Transverse colon (tissue), 4 donors: ENCODE measurements at regions of chr6 and their contacts with region 1.

Region 1: GRCh38 chr6:105094133-105094640 is 85.6 kb downstream of the POPDC3 start:
- DNase-seq: no peak
- H3K4me3 ChIP-seq: no peak overlapping the region
- H3K27ac ChIP-seq: no peak overlapping the region
- H3K4me1 ChIP-seq: no peaks in the 10 kb centered on the region
- H3K27me3 ChIP-seq: no peaks in the 10 kb centered on the region
- CTCF ChIP-seq: no peak
- EP300 ChIP-seq: no peak
- POLR2A ChIP-seq: no peak

Region 2: GRCh38 chr6:105051896-105052471 is 42.2 kb before region 1 on chr6:
- in situ Hi-C with region 1: no loop called
- intact Hi-C with region 1: no loop called
- DNase-seq: no peak
- H3K4me3 ChIP-seq: no peak overlapping the region
- H3K27ac ChIP-seq: no peak overlapping the region
- H3K4me1 ChIP-seq: no peaks in the 10 kb centered on the region
- H3K27me3 ChIP-seq: no peaks in the 10 kb centered on the region
- CTCF ChIP-seq: no peak
- EP300 ChIP-seq: no peak
- POLR2A ChIP-seq: no peak

Region 3: GRCh38 chr6:105402939-105403935 is 309.1 kb after region 1 on chr6 and contains the start of gene PREP:
- in situ Hi-C with region 1: loop called in 3 of 4 experiments (anchors 5 to 10 kb)
- intact Hi-C with region 1: loop called (anchors 5 kb)
- DNase-seq: peak; percentile 90
- H3K4me3 ChIP-seq: peak within 1 kb of the TSS; percentile 74 to 96 (median 82)
- H3K27ac ChIP-seq: peak within 1 kb of the TSS; percentile 88 to 92 (median 91)
- H3K4me1 ChIP-seq: peaks cover 8 to 41% (median 29%) of the 10 kb centered on the region in 4 donors
- H3K27me3 ChIP-seq: no peaks in the 10 kb centered on the region
- CTCF ChIP-seq: peak; percentile 70 to 95 (median 84)
- EP300 ChIP-seq: no peak
- POLR2A ChIP-seq: no peak
- total RNA-seq, gene PREP: 32.9 to 63.2 (median 41.2) TPM

Region 4: GRCh38 chr6:105522626-105523322 is 428.6 kb after region 1 on chr6:
- in situ Hi-C with region 1: no loop called
- intact Hi-C with region 1: no loop called
- DNase-seq: no peak
- H3K4me3 ChIP-seq: no peak overlapping the region
- H3K27ac ChIP-seq: no peak overlapping the region
- H3K4me1 ChIP-seq: no peaks in the 10 kb centered on the region
- H3K27me3 ChIP-seq: no peaks in the 10 kb centered on the region
- CTCF ChIP-seq: no peak
- EP300 ChIP-seq: no peak
- POLR2A ChIP-seq: no peak

Region 5: GRCh38 chr6:105536961-105537360 is 442.8 kb after region 1 on chr6:
- in situ Hi-C with region 1: no loop called
- intact Hi-C with region 1: no loop called
- DNase-seq: no peak
- H3K4me3 ChIP-seq: no peak overlapping the region
- H3K27ac ChIP-seq: no peak overlapping the region
- H3K4me1 ChIP-seq: no peaks in the 10 kb centered on the region
- H3K27me3 ChIP-seq: no peaks in the 10 kb centered on the region
- CTCF ChIP-seq: no peak
- EP300 ChIP-seq: no peak
- POLR2A ChIP-seq: no peak